Gastrocnemius medialis (tissue), 4 donors: ENCODE measurements at regions of chr15 and their contacts with region 1.

Region 1: DNA sequence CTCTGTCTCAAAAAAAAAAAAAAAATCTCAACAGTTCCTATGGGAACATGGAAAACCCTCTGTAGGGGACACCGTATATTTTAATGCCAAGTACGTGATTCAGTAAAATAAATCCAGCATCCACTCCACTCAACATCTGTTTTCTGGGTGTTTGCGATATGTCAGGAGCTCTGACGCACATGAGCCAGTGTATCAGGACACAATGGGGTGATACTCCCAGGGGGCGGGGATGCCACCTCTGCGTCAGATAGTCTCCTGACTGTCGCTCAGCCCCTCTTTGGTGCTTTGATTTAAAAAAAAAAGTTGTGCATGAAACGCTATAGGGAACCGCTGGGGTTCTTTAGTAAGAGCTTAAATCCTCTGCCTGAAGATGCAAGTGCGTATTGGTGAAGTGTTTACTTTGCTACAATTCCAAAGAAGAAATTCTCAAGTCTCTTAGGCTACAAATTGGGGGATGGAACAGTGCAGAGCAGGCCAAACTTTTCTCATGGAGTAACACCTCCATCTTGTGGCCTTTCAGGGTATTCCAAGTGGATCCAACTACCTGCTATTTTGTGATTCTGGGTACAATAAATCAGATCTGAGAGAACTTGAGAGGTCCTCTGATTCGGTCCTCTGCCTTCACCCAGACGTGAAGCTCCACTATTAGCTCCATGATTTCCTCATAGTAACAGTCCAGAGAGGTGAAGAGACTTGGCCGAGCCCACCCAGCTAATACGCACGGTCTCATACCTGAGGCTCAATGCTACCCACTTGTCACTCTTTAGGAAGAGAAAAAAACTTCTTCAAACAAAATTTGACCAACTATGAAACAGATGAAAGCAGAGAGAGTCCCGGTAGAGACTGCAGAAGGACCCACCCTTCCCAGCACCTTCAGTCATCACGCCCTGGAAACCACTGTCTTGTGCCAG is 9.3 kb upstream of the NR2E3 start:
- DNase-seq: no peak
- ATAC-seq: peak; percentile 56 to 63
- H3K4me3 ChIP-seq: no peak overlapping the region
- H3K27ac ChIP-seq: no peak overlapping the region
- H3K4me1 ChIP-seq: no peaks in the 10 kb centered on the region
- H3K27me3 ChIP-seq: no peaks in the 10 kb centered on the region
- CTCF ChIP-seq: peak; percentile 64 to 87 (median 79)
- POLR2A ChIP-seq: no peak

Region 2: GRCh38 chr15:71687902-71688508 is 113.1 kb before region 1 on chr15:
- in situ Hi-C with region 1: no loop called
- intact Hi-C with region 1: no loop called
- DNase-seq: no peak
- ATAC-seq: no peak
- H3K4me3 ChIP-seq: no peak overlapping the region
- H3K27ac ChIP-seq: no peak overlapping the region
- H3K4me1 ChIP-seq: peaks cover 9 to 18% of the 10 kb centered on the region in 2 donors
- H3K27me3 ChIP-seq: no peaks in the 10 kb centered on the region
- CTCF ChIP-seq: no peak
- POLR2A ChIP-seq: no peak

Region 3: GRCh38 chr15:71743861-71744382 is 57.2 kb before region 1 on chr15:
- in situ Hi-C with region 1: loop called (anchors 5 to 10 kb)
- intact Hi-C with region 1: loop called (anchors 2 kb)
- DNase-seq: no peak
- ATAC-seq: no peak
- H3K4me3 ChIP-seq: no peak overlapping the region
- H3K27ac ChIP-seq: no peak overlapping the region
- H3K4me1 ChIP-seq: peaks cover 0 to 10% of the 10 kb centered on the region in 2 donors
- H3K27me3 ChIP-seq: no peaks in the 10 kb centered on the region
- CTCF ChIP-seq: peak; percentile 58 to 79 (median 65)
- POLR2A ChIP-seq: no peak

Region 4: GRCh38 chr15:71752604-71753289 is 48.3 kb before region 1 on chr15:
- in situ Hi-C with region 1: loop called in 3 of 4 experiments (anchors 10 kb)
- intact Hi-C with region 1: loop called (anchors 1 kb)
- DNase-seq: no peak
- ATAC-seq: peak; percentile 58 to 75
- H3K4me3 ChIP-seq: no peak overlapping the region
- H3K27ac ChIP-seq: no peak overlapping the region
- H3K4me1 ChIP-seq: peaks cover 7 to 13% of the 10 kb centered on the region in 2 donors
- H3K27me3 ChIP-seq: no peaks in the 10 kb centered on the region
- CTCF ChIP-seq: peak in 2 of 5 experiments; percentile 27 to 34
- POLR2A ChIP-seq: no peak